Transverse colon (tissue), 4 donors: ENCODE measurements at regions of chr6 and their contacts with region 1.

Region 1: DNA sequence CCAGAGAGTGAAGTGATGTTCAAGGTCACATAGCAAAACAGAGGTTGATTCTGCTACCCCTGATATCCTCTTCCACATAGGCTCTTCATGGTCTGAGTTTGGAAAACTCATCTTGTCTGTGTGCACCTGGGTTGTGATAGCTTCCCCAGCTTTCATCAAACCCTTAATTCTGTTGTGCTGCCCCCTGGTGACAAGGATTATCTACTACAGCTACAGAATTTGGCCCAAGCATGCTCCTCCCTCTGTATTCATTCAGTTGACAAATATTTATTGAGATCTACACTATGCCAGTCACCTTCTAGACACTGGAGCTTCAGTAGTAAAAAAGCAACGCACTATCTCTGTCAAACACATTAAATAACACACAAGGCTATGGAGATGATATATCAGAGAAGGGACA is 50.4 kb downstream of the SMPDL3A start:
- DNase-seq: peak; percentile 68
- H3K4me3 ChIP-seq: no peak overlapping the region
- H3K27ac ChIP-seq: no peak overlapping the region
- H3K4me1 ChIP-seq: no peaks in the 10 kb centered on the region
- H3K27me3 ChIP-seq: no peaks in the 10 kb centered on the region
- CTCF ChIP-seq: peak; percentile 67 to 82 (median 72)
- EP300 ChIP-seq: no peak
- POLR2A ChIP-seq: no peak

Region 2: DNA sequence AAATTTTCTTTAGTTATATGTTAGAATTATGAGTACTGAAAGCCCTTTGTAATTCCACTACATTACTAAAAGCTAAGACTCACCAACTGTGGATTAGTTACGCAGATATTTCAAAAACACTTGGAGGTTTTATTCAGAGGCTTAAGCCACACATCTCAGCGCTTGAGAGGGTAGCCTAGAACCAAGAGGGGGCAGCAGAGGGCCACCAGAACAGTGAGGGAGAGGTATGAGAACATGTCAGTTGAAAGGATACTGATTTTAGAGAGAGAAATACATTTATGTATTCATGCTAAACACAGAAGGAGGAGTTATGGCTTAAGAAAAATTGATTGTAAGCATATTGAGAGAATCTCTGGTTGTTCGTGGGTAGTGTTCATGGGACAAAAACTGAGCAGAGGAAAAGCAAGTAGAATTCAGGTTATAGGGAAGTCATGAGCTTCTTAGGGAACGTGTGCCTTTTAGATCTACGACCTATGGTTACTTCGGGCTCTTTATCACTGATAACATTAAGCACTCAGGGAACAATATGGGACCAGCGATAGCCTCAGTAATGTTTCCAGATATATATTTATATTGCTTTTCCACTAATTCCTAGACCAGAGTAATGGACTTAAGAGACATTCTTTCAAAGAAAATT is 347.4 kb before region 1 on chr6:
- in situ Hi-C with region 1: loop called in 1 of 4 experiments (anchors 25 kb)
- intact Hi-C with region 1: no loop called
- DNase-seq: peak; percentile 77
- H3K4me3 ChIP-seq: no peak overlapping the region
- H3K27ac ChIP-seq: no peak overlapping the region
- H3K4me1 ChIP-seq: peaks cover 0 to 4% (median 0%) of the 10 kb centered on the region in 4 donors
- H3K27me3 ChIP-seq: no peaks in the 10 kb centered on the region
- CTCF ChIP-seq: peak; percentile 65 to 88 (median 77)
- EP300 ChIP-seq: no peak
- POLR2A ChIP-seq: no peak

Region 3: DNA sequence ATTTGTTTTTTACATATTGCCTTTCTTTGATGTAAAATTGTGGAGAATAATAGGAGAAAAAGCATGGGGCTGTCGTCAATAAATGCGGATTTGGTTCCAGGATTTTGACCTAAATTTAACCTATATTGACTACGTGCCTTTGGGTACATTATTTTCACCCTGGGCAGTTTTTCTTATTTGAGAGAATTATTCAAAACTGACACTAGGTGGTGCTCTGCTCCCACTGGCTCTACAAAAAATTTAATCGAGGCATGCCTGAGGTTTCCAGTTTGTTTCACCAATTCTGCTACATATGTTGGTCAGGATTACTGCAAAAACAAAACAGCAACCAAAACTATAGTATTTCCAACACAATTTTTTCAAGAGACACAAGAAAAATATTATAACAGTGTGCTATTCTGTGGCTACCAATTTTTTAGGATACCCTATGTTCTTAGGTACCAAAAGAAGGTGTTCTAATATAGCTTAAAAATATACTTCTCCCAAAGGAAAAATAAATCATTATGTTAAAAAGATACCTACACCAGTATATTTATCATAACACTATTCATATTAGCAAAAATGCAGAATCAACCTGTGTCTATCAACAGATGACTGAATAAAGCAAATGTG is 108.6 kb before region 1 on chr6:
- in situ Hi-C with region 1: loop called in 1 of 4 experiments (anchors 10 kb)
- intact Hi-C with region 1: loop called (anchors 5 kb)
- DNase-seq: no peak
- H3K4me3 ChIP-seq: no peak overlapping the region
- H3K27ac ChIP-seq: no peak overlapping the region
- H3K4me1 ChIP-seq: no peaks in the 10 kb centered on the region
- H3K27me3 ChIP-seq: no peaks in the 10 kb centered on the region
- CTCF ChIP-seq: peak; percentile 67 to 78 (median 75)
- EP300 ChIP-seq: no peak
- POLR2A ChIP-seq: no peak

Region 4: DNA sequence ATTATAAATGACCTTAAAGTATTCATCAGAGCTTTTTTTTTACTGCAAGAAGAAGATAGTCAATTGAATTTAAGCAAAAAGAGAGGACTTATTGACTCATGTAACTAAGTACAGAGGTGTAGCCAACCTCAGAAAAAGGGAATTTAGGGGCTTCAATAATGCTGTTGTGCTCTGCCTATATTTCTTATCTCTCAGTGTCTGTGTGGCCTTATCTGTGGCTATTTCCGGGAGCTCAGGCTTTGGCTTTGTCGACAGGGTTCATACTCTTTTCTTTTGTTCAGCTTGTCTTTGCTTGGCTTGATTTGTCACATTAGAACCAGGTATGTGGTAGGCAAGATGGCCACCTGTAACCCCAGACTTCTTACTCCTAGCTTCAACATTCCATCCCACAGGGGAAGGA is 98.5 kb before region 1 on chr6:
- in situ Hi-C with region 1: loop called (anchors 5 to 10 kb)
- intact Hi-C with region 1: no loop called
- DNase-seq: no peak
- H3K4me3 ChIP-seq: no peak overlapping the region
- H3K27ac ChIP-seq: no peak overlapping the region
- H3K4me1 ChIP-seq: no peaks in the 10 kb centered on the region
- H3K27me3 ChIP-seq: no peaks in the 10 kb centered on the region
- CTCF ChIP-seq: no peak
- EP300 ChIP-seq: no peak
- POLR2A ChIP-seq: no peak

Region 5: DNA sequence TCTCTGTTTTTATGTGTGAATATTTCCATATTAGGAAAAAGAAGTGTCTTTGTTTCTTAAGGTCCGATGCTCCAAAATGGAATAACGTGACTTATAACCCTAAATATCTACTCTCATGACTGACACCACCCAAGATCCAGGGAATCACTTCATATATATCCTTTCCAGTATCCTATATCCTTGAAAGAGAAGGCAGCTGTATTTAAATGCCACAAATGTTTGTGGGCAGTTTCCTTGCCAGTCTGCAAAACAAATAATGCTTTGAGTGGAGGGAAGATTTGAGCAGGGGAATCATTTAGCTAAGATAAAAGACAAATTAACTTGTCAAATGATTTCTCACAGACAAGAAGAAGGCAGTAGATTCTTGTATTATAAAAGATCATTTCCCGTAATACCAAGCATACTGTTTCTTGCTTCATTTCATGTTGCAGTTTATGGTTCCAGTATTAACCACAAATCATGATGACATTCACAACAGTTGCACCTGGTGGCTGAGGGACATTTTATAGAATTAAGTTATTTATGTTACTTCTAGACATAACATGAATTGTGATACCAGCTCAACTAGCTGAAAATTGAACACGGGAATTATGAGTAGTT is 89.9 kb before region 1 on chr6:
- in situ Hi-C with region 1: loop called in 3 of 4 experiments (anchors 5 to 10 kb)
- intact Hi-C with region 1: no loop called
- DNase-seq: no peak
- H3K4me3 ChIP-seq: no peak overlapping the region
- H3K27ac ChIP-seq: no peak overlapping the region
- H3K4me1 ChIP-seq: peaks cover 0 to 7% (median 2%) of the 10 kb centered on the region in 4 donors
- H3K27me3 ChIP-seq: no peaks in the 10 kb centered on the region
- CTCF ChIP-seq: no peak
- EP300 ChIP-seq: no peak
- POLR2A ChIP-seq: no peak